Posterior cingulate gyrus (tissue), 11 donors: ENCODE measurements at regions of chr13 and their contacts with region 1.

Region 1: DNA sequence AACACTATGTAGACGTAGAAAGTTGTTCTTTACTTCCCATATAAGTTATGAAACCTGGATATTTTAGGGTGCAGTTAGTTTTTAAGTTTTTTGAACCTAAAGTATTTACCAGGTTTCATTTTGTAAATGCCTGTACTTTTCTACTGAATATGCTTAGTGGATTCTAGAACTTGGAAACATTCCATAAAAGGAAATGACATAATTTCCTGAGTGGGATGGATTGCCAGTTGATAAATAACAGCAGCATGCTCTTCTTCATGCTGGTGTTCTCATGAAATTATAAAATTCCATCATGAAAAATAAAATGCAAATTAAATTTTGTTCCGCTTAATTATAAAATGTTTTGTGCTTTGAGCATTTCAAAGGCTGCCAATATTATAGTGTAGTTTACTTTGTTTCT is 362.2 kb upstream of the PCDH20 start:
- DNase-seq: no peak

Region 2: GRCh38 chr13:61765181-61765742 is 12.6 kb before region 1 on chr13:
- intact Hi-C with region 1: loop called (anchors 1 kb)
- DNase-seq: peak in 2 of 10 donors; percentile 45 to 70

Region 3: GRCh38 chr13:62065016-62065415 is 287.1 kb after region 1 on chr13:
- intact Hi-C with region 1: no loop called
- DNase-seq: no peak